ENCODE measurements at regions of chr2 and their contacts with region 1.

Region 1: GRCh38 chr2:64133828-64134227 is 10.4 kb downstream of the PELI1 start:
- DNase-seq: peak in 1 of 42 donors; percentile 30

Region 2: DNA sequence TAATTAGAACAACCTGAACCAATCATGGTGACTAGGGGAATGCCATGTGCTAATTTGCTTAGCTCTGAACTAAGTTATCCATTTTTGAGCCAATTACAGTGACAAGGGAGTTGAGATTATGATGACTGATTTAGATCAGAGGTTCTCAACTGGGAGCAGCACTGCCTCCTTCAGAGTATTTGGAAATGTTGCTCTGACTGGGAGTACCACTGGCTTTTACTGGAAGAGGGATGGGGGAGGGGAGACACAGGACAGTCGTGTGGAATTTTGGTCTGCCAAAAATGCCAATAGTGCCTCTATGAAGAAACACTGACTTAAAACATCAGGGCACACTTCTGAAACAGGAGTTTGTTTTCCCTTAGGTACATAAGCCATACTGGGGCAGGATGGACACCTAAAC is 66.5 kb before region 1 on chr2:
- intact Hi-C with region 1: no loop called
- DNase-seq: no peak

Region 3: DNA sequence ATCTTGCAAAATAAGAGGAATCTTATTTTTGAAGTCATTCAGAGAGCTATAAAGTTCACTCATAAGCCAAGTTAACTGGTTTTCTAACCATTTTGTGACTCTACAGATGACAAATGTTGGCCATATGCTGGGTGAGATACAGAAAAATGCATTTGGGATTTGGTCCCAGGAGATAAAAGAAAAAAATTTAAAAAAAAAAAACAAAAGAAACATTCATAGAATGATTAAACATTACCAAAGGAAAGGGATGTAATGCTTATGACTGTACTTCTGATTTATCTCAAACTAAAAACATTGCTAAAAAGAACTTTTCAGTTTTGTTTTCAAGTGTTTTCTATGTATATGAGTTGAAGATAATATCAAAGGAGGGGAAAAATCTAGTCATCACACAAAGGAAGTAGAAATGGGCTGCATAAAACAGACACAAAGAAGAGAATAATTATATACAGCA is 32.7 kb before region 1 on chr2:
- intact Hi-C with region 1: loop called (anchors 2 kb)
- DNase-seq: no peak

Region 4: DNA sequence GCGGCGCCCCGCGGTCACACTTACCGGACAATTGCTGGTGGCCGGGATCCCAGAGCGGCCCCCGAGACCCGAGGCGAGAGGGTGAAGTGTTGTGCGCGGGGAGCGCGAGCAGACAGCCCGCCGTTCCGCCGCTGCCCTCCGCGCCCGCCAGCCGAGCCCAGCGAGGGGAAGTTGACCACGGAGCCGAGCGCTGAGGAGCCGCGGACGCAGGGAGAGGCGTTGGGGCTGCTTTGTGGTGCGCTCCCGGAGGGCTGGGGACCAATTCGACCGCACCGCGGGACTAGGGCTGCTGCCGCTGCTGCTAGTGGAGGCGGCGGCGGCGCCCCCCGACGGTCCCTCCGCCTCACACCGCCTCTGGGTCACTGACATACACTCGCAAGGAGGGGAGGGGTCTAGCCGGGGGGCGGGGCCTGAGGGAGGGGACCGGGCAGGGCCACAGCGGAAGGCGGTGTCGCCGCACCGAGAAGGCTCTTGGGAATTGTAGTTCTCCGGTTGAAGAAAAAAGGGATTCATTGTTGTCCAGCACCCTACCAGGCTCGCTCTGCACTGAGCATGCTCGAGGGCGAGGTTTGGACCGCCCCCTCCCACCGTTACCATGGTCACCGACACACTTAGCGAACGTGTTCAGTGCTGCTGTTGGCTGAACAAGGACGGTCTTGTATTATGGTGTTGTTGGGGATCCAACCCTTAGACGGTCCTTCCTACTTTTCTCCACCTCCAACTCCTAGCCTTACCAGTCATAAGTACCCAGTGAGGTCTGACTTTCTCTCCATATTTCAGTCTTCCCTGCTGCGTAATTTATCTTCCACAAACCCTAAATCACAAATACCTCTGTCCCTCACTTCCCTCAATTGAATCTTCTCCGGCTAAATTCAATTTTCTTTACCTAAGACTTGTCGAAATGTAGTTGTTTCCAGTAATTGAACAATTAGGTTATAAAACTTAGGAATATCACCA is 10.5 kb after region 1 on chr2 and contains the start of gene PELI1:
- intact Hi-C with region 1: no loop called
- DNase-seq: peak; percentile 95 to 100 (median 99)

Region 5: GRCh38 chr2:64228126-64228678 is 94.4 kb after region 1 on chr2:
- intact Hi-C with region 1: no loop called
- DNase-seq: peak; percentile 86 to 97 (median 93)

Region 6: DNA sequence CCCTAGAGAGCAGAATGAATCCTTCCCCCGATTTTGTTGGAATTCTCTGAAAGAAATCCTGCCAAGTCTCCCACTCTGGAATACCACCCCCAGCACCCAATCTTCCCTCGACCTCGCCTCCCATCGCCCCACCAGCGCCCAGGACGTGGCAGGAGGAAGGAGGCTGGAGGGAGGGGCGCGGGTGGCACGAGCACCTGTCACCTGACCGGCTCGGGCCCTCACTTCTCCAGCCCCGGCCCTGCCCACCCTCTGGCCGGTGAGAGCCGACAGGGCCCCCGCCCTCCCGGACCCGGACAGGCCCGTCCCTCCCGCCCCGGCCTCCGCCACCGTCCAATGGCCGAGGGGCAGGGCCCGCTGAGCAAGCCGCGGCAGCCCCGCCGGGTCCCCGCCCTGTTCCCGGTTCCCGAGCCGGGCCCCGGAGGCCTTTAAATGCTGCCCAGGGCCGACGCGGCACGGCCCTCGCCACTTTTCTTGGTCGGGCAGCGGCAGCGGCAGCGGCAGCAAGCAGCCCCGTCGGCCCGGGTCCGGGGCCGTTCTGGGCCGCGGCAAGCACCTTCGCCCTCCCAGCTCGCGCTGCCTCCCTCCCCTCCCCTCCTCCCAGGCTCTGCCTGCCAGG is 320.1 kb after region 1 on chr2 and contains the start of gene LGALSL:
- intact Hi-C with region 1: loop called (anchors 10 kb)
- DNase-seq: peak in 40 of 42 donors; percentile 12 to 79 (median 58)

Region 7: GRCh38 chr2:64730551-64731262 is 596.9 kb after region 1 on chr2:
- intact Hi-C with region 1: no loop called
- DNase-seq: peak; percentile 10 to 87 (median 71)

Measured in head of caudate nucleus (tissue), 42 donors.